Activated CD4-positive, alpha-beta memory T cell treated with anti-CD3 and anti-CD28 coated beads for 36 hours (primary cell): ENCODE measurements at regions of chr11 and their contacts with region 1.

Region 1: GRCh38 chr11:116853461-116854073 is 16.1 kb upstream of the APOA1 start:
- DNase-seq: peak; percentile 78
- H3K4me3 Mint-ChIP-seq: peak overlapping the region; percentile 53
- H3K27ac Mint-ChIP-seq: peak overlapping the region; percentile 89
- H3K4me1 Mint-ChIP-seq: peaks cover 74% of the 10 kb centered on the region
- H3K27me3 Mint-ChIP-seq: no peaks in the 10 kb centered on the region

Region 2: DNA sequence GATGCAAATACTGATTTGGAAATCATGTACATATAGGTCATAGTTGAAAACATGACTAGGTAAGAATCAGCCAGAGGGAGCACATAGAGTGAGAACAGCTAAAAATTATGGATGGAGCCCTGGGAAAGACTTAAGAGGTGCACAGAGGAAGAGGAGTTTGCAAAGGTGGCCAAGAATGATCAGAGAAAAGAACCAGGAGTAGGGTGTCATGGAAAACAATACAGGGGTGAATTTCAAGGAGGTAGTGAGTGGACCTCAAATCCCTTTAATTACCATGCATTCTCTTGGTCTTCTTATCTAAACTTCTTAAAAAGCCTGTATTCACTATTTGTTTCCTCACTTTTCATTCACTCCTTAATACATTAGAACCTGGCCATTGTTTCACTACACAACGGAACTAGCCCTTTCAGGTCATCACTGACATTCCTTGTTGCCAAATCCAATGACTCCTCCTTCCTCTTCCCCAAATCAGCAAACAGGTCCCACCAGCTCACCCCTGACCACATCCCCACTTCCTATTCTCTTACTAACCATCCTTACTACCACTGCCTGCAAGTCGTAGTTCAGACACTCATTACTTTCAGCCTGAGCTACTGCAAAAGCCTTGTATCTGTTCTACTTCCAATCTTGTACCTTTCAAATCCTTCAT is 103.4 kb before region 1 on chr11:
- CTCF ChIA-PET with region 1: no interaction called
- POLR2A ChIA-PET with region 1: no interaction called
- intact Hi-C with region 1: no loop called
- DNase-seq: no peak
- H3K4me3 Mint-ChIP-seq: no peak overlapping the region
- H3K27ac Mint-ChIP-seq: no peak overlapping the region
- H3K4me1 Mint-ChIP-seq: no peaks in the 10 kb centered on the region
- H3K27me3 Mint-ChIP-seq: no peaks in the 10 kb centered on the region

Region 3: DNA sequence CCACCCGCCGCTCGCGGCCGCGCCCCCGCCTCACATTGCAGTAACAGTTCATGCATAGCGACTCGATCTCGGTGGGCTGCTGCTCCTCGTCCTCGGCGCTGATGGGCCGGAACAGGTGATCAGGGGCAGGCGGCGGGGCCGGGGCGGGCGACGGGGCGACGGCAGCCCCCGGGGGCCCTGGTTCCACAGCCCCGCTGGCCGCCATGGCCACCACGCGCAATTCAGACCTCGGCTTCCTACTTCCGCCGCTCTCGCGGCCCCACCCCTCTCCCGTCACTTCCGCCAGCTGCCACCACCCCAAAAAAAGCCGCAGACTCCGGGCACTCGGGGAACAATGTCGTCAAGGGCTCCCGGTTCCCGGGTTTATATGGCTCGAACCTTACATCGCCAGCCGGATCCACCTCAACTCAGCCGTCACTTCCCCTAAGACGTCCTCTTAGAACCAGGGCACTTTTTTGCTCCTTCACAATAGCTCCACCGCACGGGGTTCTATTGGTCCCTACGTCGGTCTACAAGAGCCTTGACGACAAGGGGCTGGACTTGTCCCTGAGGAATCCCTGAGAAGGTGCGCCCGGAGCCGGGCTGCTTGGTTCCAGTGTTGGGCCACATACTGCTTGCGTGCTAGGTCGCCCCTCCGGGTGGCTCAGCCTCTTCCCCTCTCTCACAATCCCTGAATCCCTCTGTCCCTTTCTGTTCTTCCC is 65.6 kb before region 1 on chr11 and contains the start of gene ZPR1:
- CTCF ChIA-PET with region 1: interaction called, 28 read pairs
- POLR2A ChIA-PET with region 1: interaction called, 4 read pairs
- intact Hi-C with region 1: loop called (anchors 1 kb)
- DNase-seq: peak; percentile 90
- H3K4me3 Mint-ChIP-seq: peak within 1 kb of the TSS; percentile 95
- H3K27ac Mint-ChIP-seq: peak within 1 kb of the TSS; percentile 91
- H3K4me1 Mint-ChIP-seq: peaks cover 54% of the 10 kb centered on the region
- H3K27me3 Mint-ChIP-seq: no peaks in the 10 kb centered on the region
- total RNA-seq, gene ZPR1: 101 to 102 TPM

Region 4: DNA sequence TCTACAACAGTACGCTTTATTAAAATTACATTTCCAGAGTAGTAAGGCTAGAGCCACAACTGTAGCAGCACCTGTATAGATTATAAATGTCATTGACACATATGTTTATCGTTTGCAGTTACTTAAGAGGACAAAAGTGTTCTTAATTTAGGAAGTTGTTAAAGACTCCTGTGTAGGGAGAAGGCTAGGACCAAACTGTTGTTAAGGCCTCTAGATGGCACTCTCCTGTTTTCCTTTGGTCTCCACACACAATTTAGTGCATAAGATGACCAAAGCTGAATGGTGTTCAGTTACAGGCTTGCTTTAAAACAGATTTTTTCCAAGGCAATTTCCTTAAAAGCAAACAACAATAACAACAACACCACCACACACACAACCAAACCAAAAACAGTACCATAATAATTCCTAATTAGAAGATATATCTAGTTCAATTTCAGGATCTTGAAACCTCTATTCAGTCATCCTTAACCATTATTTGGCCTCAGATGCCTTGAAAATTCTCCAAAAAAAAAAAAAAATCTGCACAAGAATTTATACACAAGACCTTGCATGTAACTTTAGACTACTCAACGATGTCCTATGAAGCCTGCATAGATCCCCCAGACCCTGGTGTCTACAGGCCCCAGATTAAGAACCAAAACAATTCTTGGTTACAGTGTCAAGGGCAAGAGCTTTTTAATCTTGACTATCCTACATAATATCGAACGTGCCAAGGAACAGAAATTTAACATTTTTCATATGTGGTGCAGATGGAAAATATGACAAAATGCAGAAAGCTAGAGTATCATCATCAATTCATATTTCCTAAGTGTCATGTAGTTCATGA is 26.4 kb after region 1 on chr11:
- CTCF ChIA-PET with region 1: interaction called, 5 read pairs
- POLR2A ChIA-PET with region 1: no interaction called
- intact Hi-C with region 1: loop called (anchors 1 kb)
- DNase-seq: no peak
- H3K4me3 Mint-ChIP-seq: no peak overlapping the region
- H3K27ac Mint-ChIP-seq: no peak overlapping the region
- H3K4me1 Mint-ChIP-seq: peaks cover 28% of the 10 kb centered on the region
- H3K27me3 Mint-ChIP-seq: no peaks in the 10 kb centered on the region

Region 5: GRCh38 chr11:116927163-116927974 is 73.8 kb after region 1 on chr11:
- CTCF ChIA-PET with region 1: interaction called, 3 read pairs
- POLR2A ChIA-PET with region 1: interaction called, 6 read pairs
- intact Hi-C with region 1: loop called (anchors 1 kb)
- DNase-seq: peak; percentile 68
- H3K4me3 Mint-ChIP-seq: peak overlapping the region; percentile 38
- H3K27ac Mint-ChIP-seq: peak overlapping the region; percentile 74
- H3K4me1 Mint-ChIP-seq: peaks cover 76% of the 10 kb centered on the region
- H3K27me3 Mint-ChIP-seq: no peaks in the 10 kb centered on the region

Region 6: GRCh38 chr11:116986521-116987105 is 133.0 kb after region 1 on chr11:
- CTCF ChIA-PET with region 1: no interaction called
- POLR2A ChIA-PET with region 1: interaction called, 12 read pairs
- intact Hi-C with region 1: loop called (anchors 1 kb)
- DNase-seq: peak; percentile 42
- H3K4me3 Mint-ChIP-seq: peak overlapping the region; percentile 63
- H3K27ac Mint-ChIP-seq: peak overlapping the region; percentile 92
- H3K4me1 Mint-ChIP-seq: peaks cover 77% of the 10 kb centered on the region
- H3K27me3 Mint-ChIP-seq: no peaks in the 10 kb centered on the region

Region 7: DNA sequence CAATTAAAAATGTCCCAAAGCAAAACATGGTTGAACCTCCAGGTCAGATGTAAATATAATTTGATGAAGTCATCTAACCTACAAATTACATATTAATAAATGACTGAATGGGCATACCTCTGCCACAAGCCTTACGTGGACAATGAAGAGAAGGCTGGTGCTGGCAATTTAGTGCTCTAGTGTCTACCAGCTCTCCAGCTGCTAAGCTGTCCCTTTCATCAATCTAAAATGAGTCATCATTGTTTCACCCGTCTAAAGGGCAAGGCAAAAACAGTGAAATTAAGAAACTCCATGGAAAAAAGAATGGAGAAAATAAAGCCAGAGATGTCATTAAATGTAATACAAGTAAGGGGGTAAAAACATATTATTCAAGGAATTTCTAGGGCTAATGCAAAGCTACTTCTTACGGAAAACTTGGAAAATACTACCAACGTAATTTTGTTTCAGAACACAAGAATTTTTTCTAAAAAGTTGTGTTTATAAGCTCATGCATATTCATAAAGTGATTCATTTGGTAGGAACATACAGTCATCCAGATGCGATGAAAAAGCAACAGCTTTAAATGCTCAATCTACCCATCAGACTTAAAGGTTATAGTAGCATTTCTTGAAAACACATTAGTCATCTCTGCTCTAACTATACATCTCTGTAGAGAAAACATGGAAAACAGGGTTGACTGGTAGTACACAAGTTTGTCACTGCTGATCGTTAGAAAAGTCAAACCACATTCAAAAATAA is 173.2 kb after region 1 on chr11:
- CTCF ChIA-PET with region 1: no interaction called
- POLR2A ChIA-PET with region 1: interaction called, 9 read pairs
- intact Hi-C with region 1: loop called (anchors 1 kb)
- DNase-seq: no peak
- H3K4me3 Mint-ChIP-seq: peak overlapping the region; percentile 13
- H3K27ac Mint-ChIP-seq: peak overlapping the region; percentile 79
- H3K4me1 Mint-ChIP-seq: peaks cover 69% of the 10 kb centered on the region
- H3K27me3 Mint-ChIP-seq: no peaks in the 10 kb centered on the region

Region 8: GRCh38 chr11:117232092-117232878 is 378.7 kb after region 1 on chr11 and contains the start of gene RNF214:
- CTCF ChIA-PET with region 1: interaction called, 4 read pairs
- POLR2A ChIA-PET with region 1: interaction called, 5 read pairs
- intact Hi-C with region 1: loop called (anchors 1 kb)
- DNase-seq: peak; percentile 83
- H3K4me3 Mint-ChIP-seq: peak within 1 kb of the TSS; percentile 99
- H3K27ac Mint-ChIP-seq: peak within 1 kb of the TSS; percentile 98
- H3K4me1 Mint-ChIP-seq: peaks cover 37% of the 10 kb centered on the region
- H3K27me3 Mint-ChIP-seq: no peaks in the 10 kb centered on the region
- total RNA-seq, gene RNF214: 16.9 to 18.3 TPM